ENCODE measurements at regions of chr6 and their contacts with region 1.

Region 1: GRCh38 chr6:110815217-110816109 is at the start of gene CDK19:
- DNase-seq: peak; percentile 99
- H3K4me3 ChIP-seq: peak within 1 kb of the TSS; percentile 66 to 97 (median 76)
- H3K27ac ChIP-seq: peak within 1 kb of the TSS; percentile 68
- H3K4me1 ChIP-seq: peaks cover 9% of the 10 kb centered on the region
- H3K27me3 ChIP-seq: peaks cover 0 to 2% of the 10 kb centered on the region in 2 experiments
- CTCF ChIP-seq: no peak
- POLR2A ChIP-seq: peak; percentile 76
- total RNA-seq, gene CDK19: 11.9 and 12.1 TPM in 2 replicates

Region 2: DNA sequence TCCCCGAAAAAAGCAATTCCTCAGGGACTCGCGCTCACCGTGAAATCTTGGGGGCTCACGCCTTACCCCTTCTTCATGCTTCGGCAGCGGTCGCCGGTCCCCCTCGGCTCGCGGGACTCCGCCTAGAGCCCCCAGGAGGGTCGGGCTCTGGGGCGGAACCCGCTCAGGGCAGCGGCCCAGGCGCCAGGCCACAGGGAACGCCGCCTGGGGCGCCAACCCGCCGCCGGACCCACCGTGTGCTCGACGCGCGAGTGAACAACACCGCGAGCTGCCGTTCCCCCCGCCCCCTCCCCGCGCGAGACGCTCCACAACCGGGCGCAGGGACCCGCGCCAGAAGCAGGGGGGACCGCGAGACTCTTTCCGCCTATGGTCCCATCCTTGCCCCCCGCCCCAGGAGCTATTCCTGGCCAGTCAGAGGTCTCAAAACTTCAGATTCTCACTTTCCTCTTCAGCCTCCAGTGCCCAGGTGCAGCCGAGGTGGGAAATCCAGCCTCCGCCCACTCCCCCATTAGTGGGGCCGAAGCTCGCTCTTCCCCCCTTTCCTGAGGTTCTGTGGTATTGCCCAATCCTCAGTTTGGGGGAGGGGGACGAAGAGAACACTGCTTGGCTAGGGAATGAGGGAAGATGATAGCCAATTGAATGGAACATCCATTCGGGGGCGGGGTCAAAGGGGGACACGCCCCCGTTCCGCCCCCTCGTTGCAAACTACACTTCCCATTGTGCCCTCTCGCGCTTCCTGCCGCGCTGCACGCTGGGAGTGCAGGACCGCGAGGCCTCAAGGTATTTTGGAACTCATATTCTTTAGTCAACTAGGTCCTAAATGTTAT is 635.8 kb before region 1 on chr6 and contains the start of gene WASF1:
- CTCF ChIA-PET with region 1: no interaction called
- POLR2A ChIA-PET with region 1: no interaction called
- dilution Hi-C with region 1: no loop called
- intact Hi-C with region 1: loop called (anchors 1 kb)
- DNase-seq: peak; percentile 99
- H3K4me3 ChIP-seq: peak within 1 kb of the TSS; percentile 61 to 94 (median 92)
- H3K27ac ChIP-seq: peak within 1 kb of the TSS; percentile 87
- H3K4me1 ChIP-seq: peaks cover 30% of the 10 kb centered on the region
- H3K27me3 ChIP-seq: no peaks in the 10 kb centered on the region
- CTCF ChIP-seq: no peak
- POLR2A ChIP-seq: peak; percentile 63
- total RNA-seq, gene WASF1: 20.9 and 23.2 TPM in 2 replicates

Region 3: DNA sequence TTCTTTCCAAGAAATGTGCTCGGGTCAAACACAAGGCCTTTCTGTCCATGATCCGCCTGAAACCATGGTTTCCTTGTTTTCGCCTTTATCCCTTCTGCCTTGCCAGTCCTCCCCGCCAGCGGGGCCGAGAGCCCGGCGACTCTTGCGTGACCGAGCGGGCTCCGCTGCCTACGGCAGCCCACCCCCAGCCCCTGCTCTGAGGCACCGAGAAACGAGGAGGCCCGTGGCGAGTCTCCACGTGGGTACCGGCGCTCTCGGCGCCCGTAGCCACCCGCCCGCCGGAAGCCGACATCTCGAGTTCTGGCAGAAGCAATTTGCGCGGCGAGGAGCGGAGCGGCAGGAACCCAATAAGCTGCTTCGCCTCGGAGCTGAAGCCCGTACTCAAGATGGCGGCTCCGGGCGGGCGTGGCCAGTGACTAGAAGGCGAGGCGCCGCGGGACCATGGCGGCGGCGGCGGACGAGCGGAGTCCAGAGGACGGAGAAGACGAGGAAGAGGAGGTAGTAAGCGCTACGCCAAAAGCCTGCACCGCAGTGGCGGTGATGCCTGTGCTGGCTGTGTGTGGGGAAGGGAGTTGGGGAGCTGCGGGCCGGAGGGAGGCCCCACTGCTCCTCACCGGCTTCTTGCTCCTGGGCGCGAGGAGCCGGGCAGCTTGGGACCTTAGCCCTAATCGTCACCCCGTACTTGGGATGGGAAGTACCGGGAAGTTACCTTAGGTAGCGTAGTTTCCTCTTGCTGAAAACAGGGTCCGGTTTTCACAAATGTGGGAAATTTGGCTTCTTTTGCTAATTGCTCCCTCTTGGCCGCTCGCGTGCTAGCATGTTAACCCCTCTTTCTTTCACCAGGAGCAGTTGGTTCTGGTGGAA is 143.1 kb after region 1 on chr6 and contains the start of gene GTF3C6:
- CTCF ChIA-PET with region 1: interaction called, 5 read pairs
- POLR2A ChIA-PET with region 1: interaction called, 8 read pairs
- dilution Hi-C with region 1: no loop called
- intact Hi-C with region 1: loop called (anchors 2 kb)
- DNase-seq: peak; percentile 93
- H3K4me3 ChIP-seq: peak within 1 kb of the TSS; percentile 76 to 94 (median 86)
- H3K27ac ChIP-seq: peak within 1 kb of the TSS; percentile 94
- H3K4me1 ChIP-seq: peaks cover 6% of the 10 kb centered on the region
- H3K27me3 ChIP-seq: peaks cover 0 to 2% of the 10 kb centered on the region in 2 experiments
- CTCF ChIP-seq: no peak
- POLR2A ChIP-seq: peak; percentile 97
- total RNA-seq, gene GTF3C6: 88.1 and 96.4 TPM in 2 replicates

Region 4: GRCh38 chr6:110981202-110981600 is 165.7 kb after region 1 on chr6:
- CTCF ChIA-PET with region 1: no interaction called
- POLR2A ChIA-PET with region 1: no interaction called
- dilution Hi-C with region 1: no loop called
- intact Hi-C with region 1: loop called (anchors 1 kb)
- DNase-seq: peak; percentile 33
- H3K4me3 ChIP-seq: peak overlapping the region; percentile 53 to 86 (median 75)
- H3K27ac ChIP-seq: peak overlapping the region; percentile 94
- H3K4me1 ChIP-seq: peaks cover 9% of the 10 kb centered on the region
- H3K27me3 ChIP-seq: no peaks in the 10 kb centered on the region
- CTCF ChIP-seq: no peak
- POLR2A ChIP-seq: no peak